Right lobe of liver (tissue), 6 donors: ENCODE measurements at regions of chr22 and their contacts with region 1.

Region 1: GRCh38 chr22:21938071-21938822 is 14.4 kb downstream of the PPM1F start:
- DNase-seq: peak; percentile 93 to 95 (median 95)
- ATAC-seq: peak; percentile 83 to 92 (median 90)
- H3K4me3 ChIP-seq: peak overlapping the region; percentile 52 to 59 (median 57)
- H3K27ac ChIP-seq: peak overlapping the region; percentile 57 to 93 (median 78)
- H3K4me1 ChIP-seq: peaks cover 0 to 24% (median 11%) of the 10 kb centered on the region in 4 donors
- H3K27me3 ChIP-seq: no peaks in the 10 kb centered on the region
- CTCF ChIP-seq: peak; percentile 97 to 99 (median 99)
- POLR2A ChIP-seq: peak; percentile 54

Region 2: DNA sequence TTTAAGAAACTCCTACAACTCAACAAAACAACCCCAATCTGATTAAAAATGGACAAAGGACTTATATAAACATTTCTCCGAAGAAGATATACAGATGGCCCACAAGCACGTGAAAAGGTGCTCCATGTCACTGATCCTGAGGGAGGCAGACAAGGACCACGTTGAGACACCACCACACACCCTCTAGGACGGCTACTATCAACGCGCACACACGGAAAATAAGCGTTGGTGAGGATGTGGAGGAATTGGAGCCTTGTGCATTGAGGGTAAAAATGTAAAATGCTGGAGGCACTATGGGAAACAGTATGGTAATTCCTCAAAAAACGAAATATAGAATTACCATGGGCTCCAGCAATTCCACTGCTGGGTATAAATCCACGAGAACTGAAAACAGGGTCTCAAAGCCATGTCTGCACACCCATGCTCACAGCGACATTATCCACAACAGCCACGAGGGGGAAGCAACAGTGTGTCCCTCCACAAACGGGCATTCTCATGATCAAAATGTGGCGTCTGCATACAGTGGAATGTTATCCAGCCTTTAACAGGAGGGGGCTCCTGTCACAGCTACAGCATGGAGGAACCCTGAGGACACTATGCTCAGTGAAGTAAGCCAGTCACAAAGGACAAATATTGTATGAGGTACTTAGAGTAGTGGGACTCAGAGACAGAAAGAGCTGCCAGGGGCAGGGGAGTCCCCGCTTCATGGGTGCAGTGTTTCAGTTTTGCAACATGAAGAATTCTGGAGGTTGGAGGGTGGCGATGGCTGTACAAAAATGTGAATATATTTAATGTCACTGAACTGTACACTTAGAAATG is 225.1 kb before region 1 on chr22:
- intact Hi-C with region 1: loop called in 1 of 2 experiments (anchors 5 kb)
- DNase-seq: peak; percentile 58 to 70 (median 59)
- ATAC-seq: peak; percentile 96 to 97 (median 96)
- H3K4me3 ChIP-seq: no peak overlapping the region
- H3K27ac ChIP-seq: no peak overlapping the region
- H3K4me1 ChIP-seq: peaks cover 0 to 4% (median 0%) of the 10 kb centered on the region in 4 donors
- H3K27me3 ChIP-seq: no peaks in the 10 kb centered on the region
- CTCF ChIP-seq: peak; percentile 67 to 87 (median 76)
- POLR2A ChIP-seq: no peak

Region 3: GRCh38 chr22:21735200-21736076 is 202.8 kb before region 1 on chr22 and contains the start of gene YPEL1:
- intact Hi-C with region 1: loop called in 1 of 2 experiments (anchors 10 kb)
- DNase-seq: peak; percentile 98 to 99 (median 98)
- ATAC-seq: peak; percentile 93 to 96 (median 95)
- H3K4me3 ChIP-seq: peak within 1 kb of the TSS; percentile 59 to 78 (median 68)
- H3K27ac ChIP-seq: peak within 1 kb of the TSS; percentile 27 to 79 (median 43)
- H3K4me1 ChIP-seq: peaks cover 0 to 4% (median 0%) of the 10 kb centered on the region in 4 donors
- H3K27me3 ChIP-seq: no peaks in the 10 kb centered on the region
- CTCF ChIP-seq: no peak
- POLR2A ChIP-seq: peak; percentile 97
- total RNA-seq, gene YPEL1: 1.0 to 11.2 (median 2.7) TPM

Region 4: GRCh38 chr22:21754523-21754922 is 183.7 kb before region 1 on chr22:
- intact Hi-C with region 1: no loop called
- DNase-seq: no peak
- ATAC-seq: peak in 3 of 4 donors; percentile 16 to 35 (median 21)
- H3K4me3 ChIP-seq: no peak overlapping the region
- H3K27ac ChIP-seq: no peak overlapping the region
- H3K4me1 ChIP-seq: no peaks in the 10 kb centered on the region
- H3K27me3 ChIP-seq: no peaks in the 10 kb centered on the region
- CTCF ChIP-seq: no peak
- POLR2A ChIP-seq: no peak

Region 5: DNA sequence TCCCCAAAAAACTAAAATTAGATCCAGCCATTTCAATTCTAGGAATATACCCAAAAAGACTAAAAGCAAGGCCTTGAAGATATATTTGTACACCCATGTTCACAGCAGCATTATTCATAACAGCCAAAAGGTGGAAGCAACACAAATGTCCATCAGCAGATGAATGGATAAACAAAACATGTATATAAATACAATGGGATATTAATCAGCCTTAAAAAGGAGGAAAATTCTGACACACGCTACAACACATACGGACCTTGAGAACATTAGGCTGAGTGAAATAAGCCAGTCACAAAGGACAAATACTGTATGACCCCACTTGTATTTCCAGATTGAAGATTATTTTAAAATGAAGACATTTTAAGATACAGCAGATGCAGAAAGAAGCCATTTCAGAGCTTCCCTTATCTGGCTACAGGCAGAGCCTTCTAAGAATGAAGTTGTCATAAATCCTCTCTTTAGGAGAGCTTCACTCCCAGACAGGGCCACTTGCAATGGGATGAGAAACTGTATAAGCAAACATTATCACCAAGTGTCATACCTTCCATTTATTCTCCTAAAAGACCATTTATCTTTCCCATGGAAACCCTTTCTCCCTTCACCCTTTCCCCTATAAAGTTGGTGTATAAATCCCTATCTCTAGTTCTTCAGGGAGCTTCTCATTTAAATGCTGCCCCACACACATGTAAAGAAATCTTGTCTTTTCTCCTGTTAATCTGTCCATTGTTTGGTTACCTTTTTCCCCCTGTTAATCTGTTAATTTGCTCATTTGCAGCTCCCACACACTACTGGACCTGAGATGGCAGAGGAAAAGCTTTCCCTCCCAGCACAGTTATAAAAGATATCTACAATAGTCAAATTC is 63.6 kb after region 1 on chr22:
- intact Hi-C with region 1: no loop called
- DNase-seq: no peak
- ATAC-seq: no peak
- H3K4me3 ChIP-seq: no peak overlapping the region
- H3K27ac ChIP-seq: no peak overlapping the region
- H3K4me1 ChIP-seq: no peaks in the 10 kb centered on the region
- H3K27me3 ChIP-seq: no peaks in the 10 kb centered on the region
- CTCF ChIP-seq: no peak
- POLR2A ChIP-seq: no peak

Region 6: DNA sequence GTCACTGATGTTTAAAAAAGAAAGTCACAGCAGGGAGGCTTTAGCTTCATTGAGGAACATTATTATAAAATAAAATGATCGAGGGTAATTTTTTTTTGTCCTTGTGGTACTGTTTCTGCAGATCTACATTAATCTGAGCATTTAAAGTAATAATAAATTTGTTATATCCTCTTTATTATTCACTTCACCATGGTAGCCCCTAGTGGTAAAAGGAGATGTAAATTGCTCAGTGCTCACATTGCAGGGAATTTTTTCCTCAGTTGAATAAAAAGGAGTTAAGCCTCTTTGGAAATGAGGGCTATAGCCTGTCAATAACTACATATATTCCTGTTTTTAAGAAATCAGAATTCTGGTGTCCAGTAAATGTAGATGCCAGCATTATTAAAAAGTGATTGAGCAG is 206.6 kb after region 1 on chr22:
- intact Hi-C with region 1: no loop called
- DNase-seq: no peak
- ATAC-seq: no peak
- H3K4me3 ChIP-seq: no peak overlapping the region
- H3K27ac ChIP-seq: no peak overlapping the region
- H3K4me1 ChIP-seq: no peaks in the 10 kb centered on the region
- H3K27me3 ChIP-seq: no peaks in the 10 kb centered on the region
- CTCF ChIP-seq: peak in 1 of 4 donors; percentile 21
- POLR2A ChIP-seq: no peak